CD4-positive, alpha-beta T cell (primary cell): ENCODE measurements at regions of chrX and their contacts with region 1.

Region 1: DNA sequence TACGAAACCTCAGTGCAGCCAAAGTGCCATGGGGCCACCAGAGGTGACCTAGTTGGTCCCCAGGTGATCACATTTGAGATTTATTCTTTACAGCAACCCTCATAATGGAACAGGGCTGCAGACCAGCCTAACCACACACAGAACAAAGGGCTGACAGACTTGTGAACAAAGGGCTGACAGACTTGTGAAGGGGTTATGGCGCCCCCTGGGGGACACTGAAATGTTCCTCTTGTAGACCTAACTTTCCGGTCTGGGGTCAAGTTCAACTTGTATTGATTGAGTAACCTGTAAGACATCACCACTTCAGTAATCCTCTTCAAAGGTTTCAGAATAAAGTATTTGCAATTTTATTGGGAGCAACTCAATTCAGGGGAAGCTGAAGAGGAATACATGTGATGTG is 175.9 kb upstream of the RPS6KA3 start:
- DNase-seq: peak; percentile 72 to 92 (median 82)
- ATAC-seq: peak; percentile 86
- H3K4me3 ChIP-seq: no peak overlapping the region
- H3K4me3 Mint-ChIP-seq: no peak overlapping the region
- H3K27ac ChIP-seq: no peak overlapping the region
- H3K27ac Mint-ChIP-seq: no peak overlapping the region
- H3K4me1 ChIP-seq: peaks cover 40% of the 10 kb centered on the region
- H3K4me1 Mint-ChIP-seq: peaks cover 60% of the 10 kb centered on the region
- H3K27me3 ChIP-seq: no peaks in the 10 kb centered on the region
- H3K27me3 Mint-ChIP-seq: no peaks in the 10 kb centered on the region
- CTCF ChIP-seq: peak; percentile 61

Region 2: DNA sequence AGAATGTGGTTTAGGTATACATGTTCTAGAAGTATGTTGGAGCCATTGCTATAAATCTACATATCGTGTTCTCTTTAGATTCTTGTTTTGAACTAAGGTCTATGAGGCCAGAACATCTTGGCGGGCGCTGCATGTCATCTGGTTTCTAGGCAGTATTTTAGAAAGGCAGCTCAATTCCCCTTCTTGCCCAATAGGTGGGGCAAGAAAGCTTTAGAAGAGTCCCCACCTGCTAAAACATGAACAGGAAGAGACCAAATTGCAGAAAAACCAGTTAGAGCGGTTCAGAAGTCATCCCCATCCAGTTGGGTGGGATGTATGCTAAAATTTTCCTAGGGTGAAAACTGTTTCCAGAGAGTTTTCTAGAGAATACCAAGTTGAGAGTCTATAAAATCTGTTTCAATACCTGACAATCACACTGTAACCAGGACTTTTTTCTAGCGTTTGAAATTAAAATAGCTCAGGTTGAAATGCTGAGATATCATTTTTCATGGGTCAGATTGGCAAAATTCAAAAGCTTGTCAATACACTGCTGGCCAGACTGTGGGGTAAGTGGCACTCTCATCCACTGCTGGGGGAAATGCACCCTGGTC is 537.7 kb before region 1 on chrX:
- CTCF ChIA-PET with region 1: no interaction called
- POLR2A ChIA-PET with region 1: no interaction called
- intact Hi-C with region 1: loop called in 1 of 2 experiments (anchors 5 kb)
- DNase-seq: peak in 4 of 14 experiments; percentile 35 to 69 (median 62)
- ATAC-seq: peak; percentile 73
- H3K4me3 ChIP-seq: no peak overlapping the region
- H3K4me3 Mint-ChIP-seq: no peak overlapping the region
- H3K27ac ChIP-seq: no peak overlapping the region
- H3K27ac Mint-ChIP-seq: no peak overlapping the region
- H3K4me1 ChIP-seq: no peaks in the 10 kb centered on the region
- H3K4me1 Mint-ChIP-seq: peaks cover 11% of the 10 kb centered on the region
- H3K27me3 ChIP-seq: no peaks in the 10 kb centered on the region
- H3K27me3 Mint-ChIP-seq: no peaks in the 10 kb centered on the region
- CTCF ChIP-seq: peak; percentile 66

Region 3: DNA sequence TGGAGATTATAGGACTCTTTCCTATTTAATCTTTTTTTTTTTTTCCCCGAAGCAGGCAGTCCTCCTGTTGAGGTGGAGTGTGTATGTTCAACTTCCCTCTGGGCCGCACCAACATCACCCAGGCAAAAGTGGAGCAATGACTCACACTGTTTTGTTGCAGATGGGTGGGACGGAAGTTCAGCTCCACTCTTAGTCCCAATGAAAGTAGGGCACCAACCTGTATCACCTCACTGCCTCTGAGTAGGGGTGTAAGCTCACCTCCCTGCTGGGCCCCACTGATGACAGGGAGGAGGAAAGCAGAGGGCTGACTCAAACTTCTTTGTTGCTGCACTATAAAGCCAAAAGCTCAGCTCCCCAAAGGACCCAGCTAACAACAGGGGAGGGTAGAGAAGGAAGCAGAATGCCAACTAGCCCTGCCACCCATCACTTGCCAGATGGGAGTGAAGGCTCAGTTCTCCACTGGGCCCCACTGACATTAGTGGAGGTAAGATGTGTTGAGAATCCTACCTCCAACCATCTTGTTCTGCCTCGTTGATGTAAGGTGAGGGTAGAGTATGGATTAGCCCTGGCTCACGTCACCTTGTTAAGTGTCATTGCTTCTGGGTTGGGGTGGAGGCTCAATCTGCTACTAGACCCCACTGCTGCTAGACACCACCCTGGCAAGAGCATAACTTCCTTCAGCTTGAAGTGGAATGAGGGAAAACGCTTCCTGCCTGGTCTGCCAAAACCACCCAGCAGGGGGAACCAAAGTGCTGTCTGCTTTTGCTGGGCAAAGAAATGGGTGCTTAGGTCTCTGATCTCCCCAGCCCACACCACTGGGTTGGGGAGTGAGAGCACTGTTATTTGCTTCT is 190.0 kb before region 1 on chrX:
- CTCF ChIA-PET with region 1: interaction called, 5 read pairs
- POLR2A ChIA-PET with region 1: interaction called, 11 read pairs
- intact Hi-C with region 1: loop called (anchors 1 kb)
- DNase-seq: peak; percentile 53 to 85 (median 68)
- ATAC-seq: peak; percentile 79
- H3K4me3 ChIP-seq: no peak overlapping the region
- H3K4me3 Mint-ChIP-seq: no peak overlapping the region
- H3K27ac ChIP-seq: peak overlapping the region in 1 of 2 donors; percentile 66
- H3K27ac Mint-ChIP-seq: peak overlapping the region; percentile 86
- H3K4me1 ChIP-seq: peaks cover 18% of the 10 kb centered on the region
- H3K4me1 Mint-ChIP-seq: peaks cover 74% of the 10 kb centered on the region
- H3K27me3 ChIP-seq: no peaks in the 10 kb centered on the region
- H3K27me3 Mint-ChIP-seq: no peaks in the 10 kb centered on the region
- CTCF ChIP-seq: peak; percentile 60

Region 4: DNA sequence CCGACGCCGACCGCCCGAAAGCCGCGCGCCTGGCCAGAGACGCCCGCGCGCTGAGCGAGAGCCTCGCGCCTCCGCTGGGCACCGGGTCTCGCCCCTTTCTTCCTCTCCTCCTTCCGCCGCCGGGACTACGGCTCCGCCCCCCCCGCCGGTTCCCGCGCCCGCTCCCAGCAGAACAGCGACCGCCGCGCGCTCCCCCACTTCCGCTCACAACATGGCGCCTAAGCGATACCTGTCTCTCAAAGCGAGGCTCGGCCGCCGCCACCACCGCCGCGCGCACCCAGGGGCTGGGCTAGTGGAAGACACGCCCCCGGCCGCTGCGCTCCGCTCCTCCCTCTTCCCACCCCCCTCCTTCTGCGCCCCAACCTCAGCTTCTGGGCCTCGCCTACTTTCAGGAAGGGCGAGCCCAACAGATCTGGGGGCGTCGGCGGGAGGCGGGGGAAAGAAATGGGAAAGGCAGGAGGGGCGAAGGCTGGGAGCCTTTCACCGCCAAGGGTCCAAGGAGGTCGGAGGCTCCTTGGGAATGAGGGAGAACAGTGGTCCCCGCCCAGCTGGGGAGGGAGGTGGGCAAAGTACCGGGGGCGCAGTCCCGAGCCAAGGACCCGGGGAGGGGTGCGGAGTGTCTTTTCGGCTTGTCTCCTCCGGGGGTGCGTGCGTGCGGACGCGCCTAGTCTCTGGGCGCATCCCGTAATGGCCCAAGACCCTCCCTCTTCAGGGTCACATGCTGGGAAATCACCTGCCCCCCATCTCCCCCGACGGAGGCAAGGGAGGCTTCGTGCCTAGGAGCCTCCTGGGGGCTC is 175.6 kb before region 1 on chrX and contains the start of gene RPS6KA3:
- CTCF ChIA-PET with region 1: no interaction called
- POLR2A ChIA-PET with region 1: interaction called, 12 read pairs
- intact Hi-C with region 1: no loop called
- DNase-seq: peak; percentile 79 to 95 (median 89)
- ATAC-seq: peak; percentile 81
- H3K4me3 ChIP-seq: peak within 1 kb of the TSS; percentile 86
- H3K4me3 Mint-ChIP-seq: peak within 1 kb of the TSS; percentile 99
- H3K27ac ChIP-seq: peak within 1 kb of the TSS; percentile 75 to 76
- H3K27ac Mint-ChIP-seq: peak within 1 kb of the TSS; percentile 97
- H3K4me1 ChIP-seq: peaks cover 15% of the 10 kb centered on the region
- H3K4me1 Mint-ChIP-seq: peaks cover 29% of the 10 kb centered on the region
- H3K27me3 ChIP-seq: no peaks in the 10 kb centered on the region
- H3K27me3 Mint-ChIP-seq: no peaks in the 10 kb centered on the region
- CTCF ChIP-seq: no peak
- total RNA-seq, gene RPS6KA3: 39.6 to 39.7 TPM

Region 5: DNA sequence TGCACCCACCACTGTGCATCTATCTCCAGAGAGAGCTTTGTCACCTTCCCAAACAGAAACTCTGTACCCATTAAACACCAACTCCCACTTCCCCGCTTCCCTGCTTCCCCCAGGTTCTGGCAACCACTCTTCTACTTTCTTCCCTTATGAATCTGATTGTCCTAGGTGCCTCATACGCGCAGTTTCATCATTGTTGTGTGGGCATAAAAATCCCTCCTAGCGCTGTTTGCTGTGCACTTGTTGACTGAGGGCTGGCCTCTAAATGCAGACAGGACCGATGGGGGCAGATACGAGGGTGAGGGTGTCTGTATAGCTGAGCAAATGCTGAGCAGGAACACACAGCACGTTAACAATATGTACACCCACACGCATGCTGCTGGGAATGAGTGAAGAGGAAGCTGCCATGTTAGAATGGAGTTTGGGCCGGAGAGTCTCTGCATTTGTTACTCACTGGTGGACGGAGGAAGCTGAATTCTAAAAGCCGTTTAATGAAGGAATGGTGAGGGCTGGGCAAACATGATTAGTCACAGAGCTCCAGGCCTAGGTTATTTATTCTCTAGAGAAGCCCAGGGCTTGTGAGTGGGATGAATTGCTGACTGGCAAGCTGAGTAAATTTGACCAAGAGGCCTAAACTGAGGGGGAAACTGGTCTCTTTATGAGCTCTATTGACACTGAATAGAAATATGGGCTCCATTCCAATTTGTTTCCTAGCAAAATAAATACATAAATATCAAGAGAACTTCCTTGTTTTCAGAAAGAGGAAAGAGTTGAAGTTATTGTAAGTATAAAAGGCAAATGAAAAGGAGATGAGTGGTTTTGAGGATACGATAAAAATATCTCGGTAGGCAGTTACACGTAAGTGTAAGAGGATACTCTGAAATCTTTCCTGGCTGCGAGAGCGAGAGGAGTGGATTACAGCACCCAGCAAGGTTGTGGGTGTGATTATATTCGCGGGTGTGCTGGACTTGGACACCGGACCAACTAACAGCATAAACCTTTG is 80.0 kb before region 1 on chrX:
- CTCF ChIA-PET with region 1: no interaction called
- POLR2A ChIA-PET with region 1: no interaction called
- intact Hi-C with region 1: no loop called
- DNase-seq: peak in 2 of 14 experiments; percentile 11 to 26
- ATAC-seq: no peak
- H3K4me3 ChIP-seq: no peak overlapping the region
- H3K4me3 Mint-ChIP-seq: no peak overlapping the region
- H3K27ac ChIP-seq: no peak overlapping the region
- H3K27ac Mint-ChIP-seq: no peak overlapping the region
- H3K4me1 ChIP-seq: no peaks in the 10 kb centered on the region
- H3K4me1 Mint-ChIP-seq: no peaks in the 10 kb centered on the region
- H3K27me3 ChIP-seq: no peaks in the 10 kb centered on the region
- H3K27me3 Mint-ChIP-seq: no peaks in the 10 kb centered on the region
- CTCF ChIP-seq: no peak

Region 6: DNA sequence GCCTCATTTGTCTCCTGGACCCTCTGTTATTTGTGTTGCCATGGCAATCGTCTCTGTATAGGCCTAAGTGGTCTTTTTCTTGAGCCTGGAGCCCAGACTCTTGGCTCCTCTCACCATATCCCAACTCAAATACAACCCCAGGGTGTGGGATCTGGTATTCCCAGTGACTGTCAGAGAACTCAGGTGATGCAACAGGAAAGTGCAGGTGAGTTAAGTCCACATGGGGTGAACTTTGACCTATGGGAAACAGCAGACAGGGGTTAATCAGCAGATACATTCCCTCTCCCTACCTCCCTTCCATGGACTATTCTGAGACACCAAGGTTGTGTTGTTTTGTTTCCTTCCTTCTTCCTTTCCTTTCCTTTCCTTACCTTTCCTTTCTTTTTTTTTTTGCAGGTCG is 45.0 kb before region 1 on chrX:
- CTCF ChIA-PET with region 1: no interaction called
- POLR2A ChIA-PET with region 1: no interaction called
- intact Hi-C with region 1: loop called in 1 of 2 experiments (anchors 5 kb)
- DNase-seq: no peak
- ATAC-seq: no peak
- H3K4me3 ChIP-seq: no peak overlapping the region
- H3K4me3 Mint-ChIP-seq: no peak overlapping the region
- H3K27ac ChIP-seq: no peak overlapping the region
- H3K27ac Mint-ChIP-seq: no peak overlapping the region
- H3K4me1 ChIP-seq: no peaks in the 10 kb centered on the region
- H3K4me1 Mint-ChIP-seq: peaks cover 12% of the 10 kb centered on the region
- H3K27me3 ChIP-seq: no peaks in the 10 kb centered on the region
- H3K27me3 Mint-ChIP-seq: no peaks in the 10 kb centered on the region
- CTCF ChIP-seq: no peak

Region 7: DNA sequence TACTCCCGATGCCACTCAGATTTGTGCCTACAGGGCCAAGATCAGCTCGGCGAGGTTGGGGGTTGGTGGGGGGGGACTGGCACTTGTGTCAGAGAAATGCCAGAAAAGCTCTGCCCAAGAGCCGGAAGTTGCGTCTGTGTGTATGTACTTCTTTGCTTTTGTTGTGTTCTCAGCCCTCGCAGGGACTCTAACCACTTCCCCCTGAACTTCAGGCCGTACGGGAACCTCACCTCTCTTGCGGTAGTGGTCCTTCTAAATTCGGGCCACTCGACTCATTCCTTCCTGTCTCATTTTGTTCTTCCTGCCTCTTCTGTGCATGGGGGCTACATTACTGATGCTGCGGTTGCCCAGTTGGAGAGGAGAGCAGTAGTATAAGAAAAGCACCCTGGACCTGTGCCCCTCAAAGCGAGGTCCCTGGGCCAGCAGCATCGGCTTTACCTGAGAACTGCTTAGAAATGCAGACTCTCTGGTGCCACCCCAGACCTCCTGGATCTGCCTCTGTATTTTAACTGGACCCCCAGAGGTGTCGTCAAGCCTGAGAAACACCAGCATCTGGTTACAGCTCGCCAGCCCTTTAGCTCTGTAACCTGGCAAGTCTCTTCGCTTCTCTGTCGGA is 29.6 kb before region 1 on chrX:
- CTCF ChIA-PET with region 1: no interaction called
- POLR2A ChIA-PET with region 1: interaction called, 28 read pairs
- intact Hi-C with region 1: no loop called
- DNase-seq: peak; percentile 26 to 87 (median 50)
- ATAC-seq: peak; percentile 83
- H3K4me3 ChIP-seq: peak overlapping the region; percentile 12
- H3K4me3 Mint-ChIP-seq: peak overlapping the region; percentile 53
- H3K27ac ChIP-seq: peak overlapping the region; percentile 41 to 58
- H3K27ac Mint-ChIP-seq: peak overlapping the region; percentile 89
- H3K4me1 ChIP-seq: peaks cover 37% of the 10 kb centered on the region
- H3K4me1 Mint-ChIP-seq: peaks cover 46% of the 10 kb centered on the region
- H3K27me3 ChIP-seq: no peaks in the 10 kb centered on the region
- H3K27me3 Mint-ChIP-seq: no peaks in the 10 kb centered on the region
- CTCF ChIP-seq: no peak

Region 8: GRCh38 chrX:20515841-20516461 is 73.4 kb after region 1 on chrX:
- CTCF ChIA-PET with region 1: no interaction called
- POLR2A ChIA-PET with region 1: no interaction called
- intact Hi-C with region 1: no loop called
- DNase-seq: peak in 3 of 14 experiments; percentile 20 to 35 (median 20)
- ATAC-seq: no peak
- H3K4me3 ChIP-seq: no peak overlapping the region
- H3K4me3 Mint-ChIP-seq: no peak overlapping the region
- H3K27ac ChIP-seq: no peak overlapping the region
- H3K27ac Mint-ChIP-seq: no peak overlapping the region
- H3K4me1 ChIP-seq: no peaks in the 10 kb centered on the region
- H3K4me1 Mint-ChIP-seq: no peaks in the 10 kb centered on the region
- H3K27me3 ChIP-seq: no peaks in the 10 kb centered on the region
- H3K27me3 Mint-ChIP-seq: no peaks in the 10 kb centered on the region
- CTCF ChIP-seq: no peak